Sigmoid colon (tissue), 7 donors: ENCODE measurements at regions of chr18 and their contacts with region 1.

Region 1: GRCh38 chr18:7488571-7488970 is 78.5 kb upstream of the PTPRM start:
- DNase-seq: no peak
- H3K4me3 ChIP-seq: no peak overlapping the region
- H3K27ac ChIP-seq: no peak overlapping the region
- H3K4me1 ChIP-seq: peaks cover 0 to 22% (median 15%) of the 10 kb centered on the region in 4 donors
- H3K27me3 ChIP-seq: no peaks in the 10 kb centered on the region
- CTCF ChIP-seq: no peak
- EP300 ChIP-seq: no peak
- POLR2A ChIP-seq: no peak

Region 2: DNA sequence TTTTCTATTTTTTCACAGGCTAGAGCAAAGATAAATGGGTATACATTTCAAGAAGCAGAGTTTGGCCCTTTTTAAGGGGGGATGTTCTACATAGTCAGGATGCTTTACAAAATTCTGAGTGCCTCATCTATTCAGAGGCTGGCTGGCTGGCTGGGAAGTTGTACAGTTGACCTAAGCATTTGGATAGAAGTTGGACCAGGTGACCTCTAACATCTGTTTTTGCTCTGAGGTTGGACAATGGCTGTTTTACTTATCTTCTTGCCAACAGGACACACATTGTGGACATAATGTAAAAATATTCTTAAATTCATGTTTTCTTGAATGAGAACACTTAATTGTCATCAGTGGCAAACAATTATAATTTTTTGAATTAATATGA is 283.9 kb after region 1 on chr18:
- intact Hi-C with region 1: no loop called
- DNase-seq: no peak
- H3K4me3 ChIP-seq: no peak overlapping the region
- H3K27ac ChIP-seq: peak overlapping the region in 2 of 4 donors; percentile 8 to 9
- H3K4me1 ChIP-seq: peaks cover 0 to 33% (median 25%) of the 10 kb centered on the region in 4 donors
- H3K27me3 ChIP-seq: no peaks in the 10 kb centered on the region
- CTCF ChIP-seq: no peak
- EP300 ChIP-seq: no peak
- POLR2A ChIP-seq: no peak

Region 3: DNA sequence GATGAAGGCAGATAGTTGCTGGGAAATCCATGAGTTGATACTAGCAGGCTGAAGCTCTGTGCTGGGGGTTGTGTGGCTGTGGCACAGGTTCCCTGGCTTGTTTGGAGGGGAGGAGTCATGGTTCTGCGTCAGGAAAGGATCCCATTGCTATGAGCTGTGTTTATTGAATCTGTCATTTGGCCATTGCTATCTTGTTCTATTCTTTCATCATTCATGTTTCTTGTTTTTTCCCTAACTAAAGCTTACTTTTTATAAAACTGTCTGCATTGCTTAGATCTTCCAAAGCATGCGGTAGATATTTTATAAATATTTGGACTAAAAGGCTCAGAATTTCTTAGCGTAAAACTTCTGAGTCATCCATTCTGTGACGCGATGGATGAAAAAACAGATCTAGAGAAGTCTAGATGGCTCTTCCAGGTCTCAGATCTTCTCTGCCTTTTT is 413.8 kb after region 1 on chr18:
- intact Hi-C with region 1: loop called (anchors 5 kb)
- DNase-seq: peak; percentile 87
- H3K4me3 ChIP-seq: no peak overlapping the region
- H3K27ac ChIP-seq: peak overlapping the region; percentile 62 to 75 (median 71)
- H3K4me1 ChIP-seq: peaks cover 0 to 47% (median 22%) of the 10 kb centered on the region in 4 donors
- H3K27me3 ChIP-seq: no peaks in the 10 kb centered on the region
- CTCF ChIP-seq: no peak
- EP300 ChIP-seq: peak; percentile 22 to 56 (median 46)
- POLR2A ChIP-seq: no peak